Tibial artery (tissue), 4 donors: ENCODE measurements at regions of chr10 and their contacts with region 1.

Region 1: GRCh38 chr10:125976960-125977603 is 80.7 kb downstream of the FANK1 start:
- DNase-seq: no peak
- H3K4me3 ChIP-seq: no peak overlapping the region
- H3K27ac ChIP-seq: no peak overlapping the region
- H3K4me1 ChIP-seq: no peaks in the 10 kb centered on the region
- H3K27me3 ChIP-seq: peaks cover 0 to 3% of the 10 kb centered on the region in 2 donors
- CTCF ChIP-seq: no peak

Region 2: DNA sequence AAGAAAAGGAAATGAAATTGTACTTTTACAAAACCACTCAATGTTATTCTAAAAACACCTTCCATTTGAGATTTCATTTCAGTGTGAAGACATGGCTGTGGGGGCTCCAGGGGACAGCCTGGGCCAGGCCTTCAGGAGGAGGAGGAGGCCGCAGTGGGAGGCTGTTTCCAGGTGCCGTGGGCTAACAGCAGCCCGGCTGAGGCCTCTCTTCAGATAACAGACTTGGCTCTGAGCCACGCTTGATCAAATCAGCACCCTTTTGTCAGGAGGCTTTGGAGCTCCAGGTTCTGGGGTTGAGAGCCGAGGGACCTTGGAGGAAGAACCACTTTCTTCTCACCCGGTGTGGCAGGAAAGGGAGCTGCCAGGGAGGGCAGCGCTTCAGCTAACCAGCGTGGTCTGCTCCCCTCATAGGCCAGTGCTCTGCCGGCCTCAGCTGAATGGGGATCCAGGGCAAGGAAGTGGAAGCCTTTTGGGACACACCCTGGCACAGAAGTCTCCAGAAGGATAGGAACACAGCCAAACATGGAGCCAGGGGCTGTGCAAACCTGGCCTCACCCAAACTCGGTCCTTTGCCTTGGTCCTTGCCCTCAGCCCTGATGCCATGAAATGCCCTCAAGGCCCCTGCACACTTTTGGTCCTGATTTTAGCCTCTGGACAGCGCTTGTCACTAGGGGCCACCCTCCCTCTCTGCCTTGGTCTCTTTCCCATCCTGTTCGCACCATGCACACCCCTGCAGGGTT is 1860.1 kb before region 1 on chr10:
- intact Hi-C with region 1: no loop called
- DNase-seq: no peak
- H3K4me3 ChIP-seq: no peak overlapping the region
- H3K27ac ChIP-seq: no peak overlapping the region
- H3K4me1 ChIP-seq: no peaks in the 10 kb centered on the region
- H3K27me3 ChIP-seq: no peaks in the 10 kb centered on the region
- CTCF ChIP-seq: no peak

Region 3: GRCh38 chr10:126504063-126504739 is 527.1 kb after region 1 on chr10:
- intact Hi-C with region 1: loop called (anchors 10 kb)
- DNase-seq: no peak
- H3K4me3 ChIP-seq: no peak overlapping the region
- H3K27ac ChIP-seq: no peak overlapping the region
- H3K4me1 ChIP-seq: no peaks in the 10 kb centered on the region
- H3K27me3 ChIP-seq: peaks cover 0 to 3% of the 10 kb centered on the region in 2 donors
- CTCF ChIP-seq: peak; percentile 59 to 69